H1 (cell line): ENCODE measurements at regions of chr15 and their contacts with region 1.

Region 1: GRCh38 chr15:68672781-68673205 is 94.0 kb downstream of the CORO2B start:
- DNase-seq: peak in 1 of 2 experiments; percentile 65
- H3K4me3 ChIP-seq: no peak overlapping the region
- H3K27ac ChIP-seq: no peak overlapping the region
- H3K4me1 ChIP-seq: peaks cover 2 to 3% (median 3%) of the 10 kb centered on the region in 4 experiments; a peak in 5 of 7 replicates
- H3K27me3 ChIP-seq: peaks cover 0 to 2% (median 0%) of the 10 kb centered on the region in 4 experiments; a peak in 2 of 7 replicates
- CTCF ChIP-seq: peak; percentile 63 to 86 (median 72)
- EP300 ChIP-seq: no peak
- POLR2A ChIP-seq: no peak
- RAD21 ChIP-seq: peak; percentile 78 to 87

Region 2: DNA sequence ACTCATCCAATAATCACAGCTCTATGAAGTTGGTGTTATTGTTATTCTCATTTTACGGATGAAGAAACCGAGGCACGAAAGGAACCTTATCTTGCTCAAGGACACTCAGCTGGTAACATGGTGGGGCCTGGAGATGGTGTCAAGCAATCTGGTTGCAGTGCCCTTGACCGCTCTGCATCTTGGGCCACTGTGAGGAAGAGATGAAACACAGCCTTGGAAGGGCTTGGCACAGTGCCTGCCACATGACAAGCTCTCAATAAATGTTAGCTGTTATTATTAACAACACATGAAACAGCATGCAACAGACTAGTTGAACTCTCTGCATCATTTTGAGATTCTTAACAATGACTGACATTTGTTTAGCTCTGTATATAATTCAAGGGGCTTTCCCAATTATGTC is 230.8 kb before region 1 on chr15:
- CTCF ChIA-PET with region 1: no interaction called
- POLR2A ChIA-PET with region 1: no interaction called
- DNase-seq: peak in 1 of 2 experiments; percentile 11
- H3K4me3 ChIP-seq: no peak overlapping the region
- H3K27ac ChIP-seq: no peak overlapping the region
- H3K4me1 ChIP-seq: no peaks in the 10 kb centered on the region
- H3K27me3 ChIP-seq: peaks cover 0 to 1% (median 0%) of the 10 kb centered on the region in 4 experiments; a peak in 1 of 7 replicates
- CTCF ChIP-seq: no peak
- EP300 ChIP-seq: no peak
- POLR2A ChIP-seq: no peak
- RAD21 ChIP-seq: no peak

Region 3: DNA sequence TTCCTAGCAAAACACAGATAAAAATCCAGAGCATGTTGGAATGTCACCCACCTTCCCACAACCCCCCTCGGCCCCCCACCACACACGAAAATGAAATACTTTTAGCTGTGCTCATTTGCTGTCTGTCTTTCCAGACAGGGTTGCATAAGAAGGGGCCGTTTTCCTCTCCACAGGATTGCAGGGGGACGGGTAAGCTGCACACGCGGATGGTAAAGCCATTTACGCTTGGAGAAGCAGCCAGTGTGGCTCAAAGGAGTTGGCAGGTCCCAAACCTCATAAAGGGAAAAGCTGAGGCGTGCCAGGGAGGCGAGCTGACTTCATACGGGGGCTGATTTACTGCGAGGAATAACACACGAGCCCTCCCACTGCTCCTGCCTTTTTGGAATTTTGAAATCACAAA is 193.4 kb before region 1 on chr15:
- CTCF ChIA-PET with region 1: no interaction called
- POLR2A ChIA-PET with region 1: no interaction called
- DNase-seq: no peak
- H3K4me3 ChIP-seq: no peak overlapping the region
- H3K27ac ChIP-seq: no peak overlapping the region
- H3K4me1 ChIP-seq: no peaks in the 10 kb centered on the region
- H3K27me3 ChIP-seq: no peaks in the 10 kb centered on the region; a peak in 1 of 7 replicates
- CTCF ChIP-seq: no peak
- EP300 ChIP-seq: no peak
- POLR2A ChIP-seq: no peak
- RAD21 ChIP-seq: no peak

Region 4: GRCh38 chr15:68566377-68566954 is 106.3 kb before region 1 on chr15:
- CTCF ChIA-PET with region 1: interaction called, 101 read pairs
- POLR2A ChIA-PET with region 1: no interaction called
- DNase-seq: no peak
- H3K4me3 ChIP-seq: no peak overlapping the region
- H3K27ac ChIP-seq: no peak overlapping the region
- H3K4me1 ChIP-seq: peaks cover 2 to 23% (median 5%) of the 10 kb centered on the region in 4 experiments; a peak in 6 of 7 replicates
- H3K27me3 ChIP-seq: no peaks in the 10 kb centered on the region; a peak in 1 of 7 replicates
- CTCF ChIP-seq: no peak
- EP300 ChIP-seq: no peak
- POLR2A ChIP-seq: no peak
- RAD21 ChIP-seq: no peak

Region 5: GRCh38 chr15:68589783-68590710 is 82.7 kb before region 1 on chr15:
- CTCF ChIA-PET with region 1: interaction called, 26 read pairs
- POLR2A ChIA-PET with region 1: interaction called, 4 read pairs
- DNase-seq: no peak
- H3K4me3 ChIP-seq: no peak overlapping the region
- H3K27ac ChIP-seq: no peak overlapping the region
- H3K4me1 ChIP-seq: peaks cover 2 to 9% (median 3%) of the 10 kb centered on the region in 4 experiments
- H3K27me3 ChIP-seq: no peaks in the 10 kb centered on the region
- CTCF ChIP-seq: no peak
- EP300 ChIP-seq: no peak
- POLR2A ChIP-seq: no peak
- RAD21 ChIP-seq: no peak

Region 6: DNA sequence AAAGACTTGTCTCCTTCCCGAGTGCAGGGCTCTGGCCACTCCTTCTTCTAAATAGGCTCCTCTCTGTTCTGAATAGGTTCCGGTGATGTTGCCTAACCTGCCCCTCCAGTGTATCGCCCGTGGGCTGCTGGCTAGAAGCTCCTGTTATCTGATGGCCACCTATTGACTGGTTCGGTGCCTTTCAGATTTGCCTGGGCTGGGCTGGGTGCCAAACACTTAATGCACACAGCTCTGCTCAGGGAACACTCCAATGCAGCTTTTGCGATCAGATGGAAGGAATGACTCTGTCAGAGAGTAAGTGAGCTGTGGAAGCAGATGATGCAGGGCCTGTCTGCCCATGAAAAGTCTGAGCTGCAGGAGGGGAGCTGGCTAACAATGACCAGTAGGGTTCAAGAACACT is 18.9 kb after region 1 on chr15:
- CTCF ChIA-PET with region 1: interaction called, 52 read pairs
- POLR2A ChIA-PET with region 1: no interaction called
- DNase-seq: no peak
- H3K4me3 ChIP-seq: no peak overlapping the region
- H3K27ac ChIP-seq: no peak overlapping the region
- H3K4me1 ChIP-seq: peaks cover 1 to 12% (median 5%) of the 10 kb centered on the region in 4 experiments
- H3K27me3 ChIP-seq: no peaks in the 10 kb centered on the region
- CTCF ChIP-seq: no peak
- EP300 ChIP-seq: no peak
- POLR2A ChIP-seq: no peak
- RAD21 ChIP-seq: no peak; a peak in 1 of 4 replicates

Region 7: DNA sequence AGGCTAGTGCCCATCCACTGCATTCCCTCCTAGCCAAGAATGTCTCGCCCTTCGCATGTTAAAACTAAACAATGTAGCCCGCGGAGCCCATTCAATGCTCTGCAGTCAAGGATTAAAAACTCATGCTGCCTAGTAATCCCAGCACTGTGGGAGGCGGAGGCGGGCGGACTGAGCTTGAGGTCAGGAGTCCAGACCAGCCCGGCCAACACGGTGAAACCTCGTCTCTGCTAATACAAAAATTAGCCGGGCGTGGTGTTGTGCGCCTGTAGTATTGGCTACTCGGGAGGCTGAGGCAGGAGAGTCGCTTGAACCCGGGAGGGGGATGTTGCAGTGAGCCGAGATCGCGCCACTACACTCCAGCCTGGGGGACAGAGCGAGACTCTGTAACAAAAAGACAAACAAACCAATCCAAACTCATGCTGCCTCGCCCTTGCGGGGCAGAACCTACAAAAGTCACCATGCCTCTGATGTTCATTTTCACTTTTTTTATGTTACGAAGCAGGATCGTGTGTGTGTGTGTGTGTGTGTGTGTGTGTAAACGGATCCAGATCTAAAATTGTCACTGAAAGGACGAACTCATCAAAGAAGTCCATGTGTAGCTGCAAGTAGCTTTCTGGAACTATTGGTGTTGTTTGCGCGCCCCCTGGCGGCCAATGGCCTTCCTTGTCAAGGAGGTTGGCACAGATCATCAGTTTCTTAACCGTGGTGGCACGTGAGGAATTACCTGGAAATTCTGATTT is 202.8 kb after region 1 on chr15:
- CTCF ChIA-PET with region 1: interaction called, 18 read pairs
- POLR2A ChIA-PET with region 1: no interaction called
- DNase-seq: peak; percentile 91 to 97
- H3K4me3 ChIP-seq: peak overlapping the region; percentile 24 to 65 (median 50); a peak in 7 of 8 replicates
- H3K27ac ChIP-seq: no peak overlapping the region
- H3K4me1 ChIP-seq: peaks cover 2 to 3% (median 2%) of the 10 kb centered on the region in 4 experiments; a peak in 4 of 7 replicates
- H3K27me3 ChIP-seq: peaks cover 0 to 8% (median 1%) of the 10 kb centered on the region in 4 experiments; a peak in 4 of 7 replicates
- CTCF ChIP-seq: peak; percentile 83 to 90 (median 89)
- EP300 ChIP-seq: no peak
- POLR2A ChIP-seq: no peak; a peak in 1 of 3 replicates
- RAD21 ChIP-seq: peak; percentile 94 to 95